CD4-positive, alpha-beta memory T cell (primary cell): ENCODE measurements at regions of chr16 and their contacts with region 1.

Region 1: GRCh38 chr16:75110637-75111513 is 5.7 kb downstream of the LDHD start:
- DNase-seq: peak; percentile 79 to 84 (median 80)
- H3K4me3 ChIP-seq: peak overlapping the region; percentile 5 to 39
- H3K4me3 Mint-ChIP-seq: peak overlapping the region; percentile 9 to 77 (median 61)
- H3K27ac ChIP-seq: peak overlapping the region; percentile 56
- H3K27ac Mint-ChIP-seq: peak overlapping the region; percentile 84 to 95 (median 92)
- H3K4me1 ChIP-seq: peaks cover 58% of the 10 kb centered on the region
- H3K4me1 Mint-ChIP-seq: peaks cover 32 to 62% (median 47%) of the 10 kb centered on the region in 4 donors
- H3K27me3 ChIP-seq: no peaks in the 10 kb centered on the region
- H3K27me3 Mint-ChIP-seq: peaks cover 0 to 1% of the 10 kb centered on the region in 2 donors

Region 2: DNA sequence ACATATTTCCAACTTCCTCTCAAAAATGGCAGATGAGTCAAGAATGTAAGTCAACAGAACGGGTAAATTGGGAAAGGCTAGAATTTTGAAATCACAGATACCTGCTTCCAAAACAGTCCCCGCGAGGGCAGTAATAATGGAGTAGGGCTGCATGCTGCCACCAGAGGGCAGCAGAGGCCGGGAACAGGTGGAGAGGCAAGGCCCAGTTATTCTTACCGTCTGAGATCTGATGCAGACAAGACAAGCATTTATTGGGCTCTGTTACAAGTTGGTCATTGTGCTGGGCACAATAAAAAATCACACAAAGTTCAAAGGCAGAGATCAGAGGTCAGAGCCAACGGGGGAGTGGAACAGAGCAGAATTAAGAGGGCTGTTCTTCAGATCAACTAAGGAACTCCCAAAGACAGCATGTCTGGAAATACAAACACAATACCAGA is 401.4 kb before region 1 on chr16:
- CTCF ChIA-PET with region 1: interaction called, 10 read pairs
- POLR2A ChIA-PET with region 1: no interaction called
- intact Hi-C with region 1: loop called (anchors 1 kb)
- DNase-seq: peak; percentile 70 to 79 (median 78)
- H3K4me3 ChIP-seq: no peak overlapping the region
- H3K4me3 Mint-ChIP-seq: no peak overlapping the region
- H3K27ac ChIP-seq: no peak overlapping the region
- H3K27ac Mint-ChIP-seq: peak overlapping the region in 5 of 7 donors; percentile 44 to 93 (median 58)
- H3K4me1 ChIP-seq: no peaks in the 10 kb centered on the region
- H3K4me1 Mint-ChIP-seq: peaks cover 4 to 6% (median 6%) of the 10 kb centered on the region in 4 donors
- H3K27me3 ChIP-seq: no peaks in the 10 kb centered on the region
- H3K27me3 Mint-ChIP-seq: no peaks in the 10 kb centered on the region

Region 3: GRCh38 chr16:74921051-74921450 is 189.8 kb before region 1 on chr16:
- CTCF ChIA-PET with region 1: no interaction called
- POLR2A ChIA-PET with region 1: no interaction called
- intact Hi-C with region 1: no loop called
- DNase-seq: no peak
- H3K4me3 ChIP-seq: no peak overlapping the region
- H3K4me3 Mint-ChIP-seq: no peak overlapping the region
- H3K27ac ChIP-seq: no peak overlapping the region
- H3K27ac Mint-ChIP-seq: peak overlapping the region in 4 of 7 donors; percentile 22 to 69 (median 38)
- H3K4me1 ChIP-seq: no peaks in the 10 kb centered on the region
- H3K4me1 Mint-ChIP-seq: no peaks in the 10 kb centered on the region
- H3K27me3 ChIP-seq: no peaks in the 10 kb centered on the region
- H3K27me3 Mint-ChIP-seq: no peaks in the 10 kb centered on the region

Region 4: DNA sequence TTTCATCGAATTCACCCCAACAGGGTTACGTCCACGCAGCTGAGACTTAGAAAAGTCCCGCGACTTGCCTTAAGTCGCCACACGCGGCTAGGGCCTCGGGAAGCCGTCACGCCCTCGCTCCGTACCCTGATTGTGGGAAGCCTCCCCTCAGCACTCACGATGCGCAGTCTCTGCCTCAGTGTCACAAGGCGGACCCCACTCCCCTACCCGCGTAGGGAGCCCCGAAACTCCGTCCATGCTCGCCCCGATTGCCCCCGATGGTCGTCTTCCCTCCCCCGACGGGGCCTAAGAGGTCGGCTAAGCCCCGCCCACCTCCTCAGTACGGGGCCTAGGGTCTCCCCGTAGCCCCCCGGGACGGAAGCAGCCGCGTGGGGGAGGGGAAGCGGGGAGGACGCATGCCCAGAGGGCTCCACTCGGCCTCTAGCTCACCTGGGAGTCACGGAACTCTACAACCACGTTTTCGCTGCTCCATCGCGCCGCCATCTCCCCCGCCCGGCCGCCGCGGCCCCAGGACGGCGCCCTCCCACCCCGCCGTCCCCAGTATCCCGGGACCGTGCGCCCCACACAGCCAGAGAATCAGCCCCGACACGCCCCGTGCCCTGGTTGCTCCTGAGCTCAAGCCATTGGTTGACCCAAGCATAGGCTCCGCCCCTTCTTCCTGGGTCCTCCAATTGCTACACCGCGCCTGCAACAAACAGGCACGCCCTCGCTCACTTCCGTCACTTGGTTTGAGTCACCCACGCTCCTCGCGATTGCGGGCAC is 126.2 kb before region 1 on chr16 and contains the start of gene WDR59:
- CTCF ChIA-PET with region 1: interaction called, 62 read pairs
- POLR2A ChIA-PET with region 1: interaction called, 15 read pairs
- intact Hi-C with region 1: loop called (anchors 1 kb)
- DNase-seq: peak; percentile 97 to 100 (median 99)
- H3K4me3 ChIP-seq: peak within 1 kb of the TSS; percentile 90 to 96
- H3K4me3 Mint-ChIP-seq: peak within 1 kb of the TSS; percentile 93 to 98 (median 96)
- H3K27ac ChIP-seq: peak within 1 kb of the TSS; percentile 87
- H3K27ac Mint-ChIP-seq: peak within 1 kb of the TSS; percentile 84 to 99 (median 95)
- H3K4me1 ChIP-seq: peaks cover 18% of the 10 kb centered on the region
- H3K4me1 Mint-ChIP-seq: peaks cover 8 to 29% (median 19%) of the 10 kb centered on the region in 4 donors
- H3K27me3 ChIP-seq: no peaks in the 10 kb centered on the region
- H3K27me3 Mint-ChIP-seq: no peaks in the 10 kb centered on the region
- total RNA-seq, gene WDR59: 116 to 127 TPM

Region 5: GRCh38 chr16:75017670-75018525 is 93.0 kb before region 1 on chr16:
- CTCF ChIA-PET with region 1: interaction called, 33 read pairs
- POLR2A ChIA-PET with region 1: interaction called, 4 read pairs
- intact Hi-C with region 1: no loop called
- DNase-seq: no peak
- H3K4me3 ChIP-seq: no peak overlapping the region
- H3K4me3 Mint-ChIP-seq: peak overlapping the region in 1 of 8 donors; percentile 1
- H3K27ac ChIP-seq: no peak overlapping the region
- H3K27ac Mint-ChIP-seq: peak overlapping the region in 3 of 7 donors; percentile 26 to 48 (median 46)
- H3K4me1 ChIP-seq: peaks cover 3% of the 10 kb centered on the region
- H3K4me1 Mint-ChIP-seq: peaks cover under 1 to 13% (median 6%) of the 10 kb centered on the region in 4 donors
- H3K27me3 ChIP-seq: no peaks in the 10 kb centered on the region
- H3K27me3 Mint-ChIP-seq: no peaks in the 10 kb centered on the region

Region 6: DNA sequence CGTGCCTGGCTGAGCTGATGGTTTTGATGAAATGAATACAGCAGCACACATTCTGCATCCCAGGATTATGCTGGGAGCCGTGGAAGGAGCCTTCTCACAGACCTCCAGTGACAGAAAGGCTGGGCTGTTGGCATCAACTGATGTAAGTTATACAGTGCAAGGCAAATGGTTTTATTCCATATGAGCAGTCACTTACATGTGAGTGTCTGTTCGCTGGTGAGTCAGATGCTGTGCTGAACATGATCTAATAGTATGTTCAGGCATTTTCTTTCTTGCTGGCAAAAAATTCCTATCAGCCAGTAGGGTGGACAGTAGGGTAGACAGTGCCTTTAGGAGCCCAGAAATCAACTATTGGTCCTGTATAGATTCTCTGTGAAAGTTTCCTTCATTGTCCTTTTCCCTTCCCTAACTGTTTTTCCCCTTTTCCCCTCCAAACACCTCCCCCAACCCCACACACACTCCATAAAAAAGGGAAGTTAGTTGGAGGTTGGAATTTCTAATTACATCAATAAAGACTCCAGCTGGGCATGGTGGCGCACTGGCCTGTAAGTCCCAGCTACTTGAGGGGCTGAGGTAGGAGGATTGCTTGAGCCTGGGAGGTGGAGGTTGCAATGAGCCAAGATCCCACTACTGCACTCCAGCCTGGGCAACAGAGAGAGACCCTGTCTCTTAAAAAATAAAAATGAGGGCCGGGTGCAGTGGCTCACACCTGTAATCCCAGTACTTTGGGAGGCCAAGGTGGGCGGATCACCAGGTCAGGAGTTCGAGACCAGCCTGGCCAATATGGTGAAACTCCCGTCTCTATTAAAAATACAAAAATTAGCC is 30.5 kb before region 1 on chr16:
- CTCF ChIA-PET with region 1: interaction called, 54 read pairs
- POLR2A ChIA-PET with region 1: interaction called, 48 read pairs
- intact Hi-C with region 1: loop called (anchors 1 kb)
- DNase-seq: no peak
- H3K4me3 ChIP-seq: no peak overlapping the region
- H3K4me3 Mint-ChIP-seq: no peak overlapping the region
- H3K27ac ChIP-seq: no peak overlapping the region
- H3K27ac Mint-ChIP-seq: peak overlapping the region in 1 of 7 donors; percentile 46
- H3K4me1 ChIP-seq: peaks cover 26% of the 10 kb centered on the region
- H3K4me1 Mint-ChIP-seq: peaks cover 30 to 38% (median 34%) of the 10 kb centered on the region in 4 donors
- H3K27me3 ChIP-seq: no peaks in the 10 kb centered on the region
- H3K27me3 Mint-ChIP-seq: no peaks in the 10 kb centered on the region

Region 7: GRCh38 chr16:75148311-75149195 is 37.7 kb after region 1 on chr16 and contains the start of gene ZFP1:
- CTCF ChIA-PET with region 1: interaction called, 13 read pairs
- POLR2A ChIA-PET with region 1: no interaction called
- intact Hi-C with region 1: loop called (anchors 1 kb)
- DNase-seq: peak; percentile 92 to 96 (median 93)
- H3K4me3 ChIP-seq: peak within 1 kb of the TSS; percentile 44 to 95
- H3K4me3 Mint-ChIP-seq: peak within 1 kb of the TSS; percentile 82 to 91 (median 88)
- H3K27ac ChIP-seq: peak within 1 kb of the TSS; percentile 75
- H3K27ac Mint-ChIP-seq: peak within 1 kb of the TSS; percentile 75 to 93 (median 91)
- H3K4me1 ChIP-seq: peaks cover 5% of the 10 kb centered on the region
- H3K4me1 Mint-ChIP-seq: peaks cover 8 to 23% (median 13%) of the 10 kb centered on the region in 4 donors
- H3K27me3 ChIP-seq: no peaks in the 10 kb centered on the region
- H3K27me3 Mint-ChIP-seq: no peaks in the 10 kb centered on the region
- total RNA-seq, gene ZFP1: 11.7 to 13.4 TPM

Region 8: DNA sequence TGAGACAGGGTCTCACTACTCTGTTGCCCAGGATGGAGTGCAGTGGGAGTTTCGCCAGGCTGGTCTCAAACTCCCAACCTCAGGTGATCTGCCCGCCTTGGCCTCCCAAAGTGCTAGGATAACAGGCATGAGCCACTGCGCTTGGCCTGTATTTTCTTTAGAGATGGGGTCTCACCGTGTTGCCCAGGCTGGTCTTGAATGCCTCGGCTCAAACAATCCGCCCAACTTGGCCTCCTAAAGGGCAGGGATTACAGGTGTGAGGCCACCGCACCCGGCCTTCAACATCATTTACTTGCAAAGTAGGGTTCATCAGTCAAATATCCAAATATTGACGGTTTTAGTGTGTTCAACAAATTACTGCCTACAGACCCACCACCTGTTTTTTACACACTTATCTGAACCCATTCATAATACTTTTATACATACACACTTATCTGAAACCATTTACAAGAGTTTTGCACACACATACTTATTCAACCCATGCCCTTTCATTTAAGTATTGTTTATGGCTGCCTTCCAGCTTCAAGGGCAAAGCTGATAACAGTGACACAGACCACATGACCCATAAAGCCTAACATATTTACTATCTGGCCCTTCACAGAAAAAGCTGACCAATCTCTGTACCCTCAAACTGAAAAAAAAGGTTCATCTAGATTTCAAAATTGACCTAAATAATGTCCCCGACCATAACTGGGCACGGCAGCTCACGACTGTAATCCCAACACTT is 341.8 kb after region 1 on chr16:
- CTCF ChIA-PET with region 1: no interaction called
- POLR2A ChIA-PET with region 1: no interaction called
- intact Hi-C with region 1: no loop called
- DNase-seq: no peak
- H3K4me3 ChIP-seq: no peak overlapping the region
- H3K4me3 Mint-ChIP-seq: no peak overlapping the region
- H3K27ac ChIP-seq: no peak overlapping the region
- H3K27ac Mint-ChIP-seq: peak overlapping the region in 3 of 7 donors; percentile 17 to 81 (median 42)
- H3K4me1 ChIP-seq: peaks cover 12% of the 10 kb centered on the region
- H3K4me1 Mint-ChIP-seq: peaks cover 25 to 52% (median 37%) of the 10 kb centered on the region in 4 donors
- H3K27me3 ChIP-seq: no peaks in the 10 kb centered on the region
- H3K27me3 Mint-ChIP-seq: no peaks in the 10 kb centered on the region